Left cardiac atrium (tissue), 4 donors: ENCODE measurements at regions of chr19 and their contacts with region 1.

Region 1: DNA sequence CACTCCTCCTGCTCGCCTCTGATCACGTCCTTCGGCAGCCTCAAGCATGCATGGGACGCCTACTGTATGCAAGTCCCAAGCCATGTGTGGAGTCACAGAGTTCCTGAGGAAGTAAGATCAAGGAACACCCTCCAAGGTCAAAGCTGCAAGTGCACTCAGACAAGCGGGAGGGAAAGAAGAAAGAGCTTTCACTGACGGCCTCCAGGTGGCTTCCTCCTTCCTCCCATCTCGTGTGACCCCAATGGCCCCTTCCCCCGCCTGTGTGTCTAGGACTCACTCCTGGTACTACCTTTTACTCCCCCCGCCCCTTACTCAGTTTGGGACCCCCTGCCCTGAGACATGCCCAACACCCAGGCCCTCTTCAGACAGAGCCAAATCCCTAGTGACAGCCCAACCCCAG is 6.0 kb downstream of the HAUS8 start:
- DNase-seq: no peak
- ATAC-seq: no peak

Region 2: DNA sequence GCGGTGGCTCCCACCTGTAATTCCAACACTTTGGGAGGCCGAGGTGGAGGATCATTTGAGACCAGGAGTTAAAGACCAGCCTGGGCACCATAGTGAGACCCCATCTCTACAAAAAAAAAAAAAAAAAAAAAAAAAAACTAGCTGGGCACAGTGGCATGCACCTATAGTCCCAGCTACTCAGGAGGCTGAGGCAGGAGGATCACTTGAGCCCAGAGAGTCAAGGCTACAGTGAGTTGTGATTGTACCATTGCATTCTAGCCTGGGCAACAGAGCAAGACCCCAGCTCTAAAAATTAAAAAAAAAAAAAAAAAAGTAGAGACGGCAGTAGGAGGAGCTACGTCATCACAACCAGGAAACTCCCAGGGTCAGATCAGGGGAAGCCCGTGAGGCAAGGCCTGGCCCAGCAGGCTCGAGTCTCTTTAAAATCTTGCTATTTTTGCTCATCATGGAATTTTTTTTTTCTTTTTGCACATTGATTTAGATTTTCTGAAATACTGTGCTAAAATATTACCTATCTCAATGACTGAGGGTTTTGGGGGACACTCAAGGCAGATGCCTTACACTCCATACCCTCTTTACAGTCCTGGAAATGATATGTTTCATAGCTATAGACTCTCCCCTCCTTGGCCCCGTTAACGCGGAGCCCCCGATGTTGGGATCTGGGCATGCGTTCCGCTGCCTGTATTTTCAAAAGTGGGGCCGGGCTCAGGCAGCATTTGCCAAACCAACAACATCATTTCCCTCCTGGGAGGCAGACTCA is 101.5 kb after region 1 on chr19:
- intact Hi-C with region 1: no loop called
- DNase-seq: no peak
- ATAC-seq: no peak

Region 3: DNA sequence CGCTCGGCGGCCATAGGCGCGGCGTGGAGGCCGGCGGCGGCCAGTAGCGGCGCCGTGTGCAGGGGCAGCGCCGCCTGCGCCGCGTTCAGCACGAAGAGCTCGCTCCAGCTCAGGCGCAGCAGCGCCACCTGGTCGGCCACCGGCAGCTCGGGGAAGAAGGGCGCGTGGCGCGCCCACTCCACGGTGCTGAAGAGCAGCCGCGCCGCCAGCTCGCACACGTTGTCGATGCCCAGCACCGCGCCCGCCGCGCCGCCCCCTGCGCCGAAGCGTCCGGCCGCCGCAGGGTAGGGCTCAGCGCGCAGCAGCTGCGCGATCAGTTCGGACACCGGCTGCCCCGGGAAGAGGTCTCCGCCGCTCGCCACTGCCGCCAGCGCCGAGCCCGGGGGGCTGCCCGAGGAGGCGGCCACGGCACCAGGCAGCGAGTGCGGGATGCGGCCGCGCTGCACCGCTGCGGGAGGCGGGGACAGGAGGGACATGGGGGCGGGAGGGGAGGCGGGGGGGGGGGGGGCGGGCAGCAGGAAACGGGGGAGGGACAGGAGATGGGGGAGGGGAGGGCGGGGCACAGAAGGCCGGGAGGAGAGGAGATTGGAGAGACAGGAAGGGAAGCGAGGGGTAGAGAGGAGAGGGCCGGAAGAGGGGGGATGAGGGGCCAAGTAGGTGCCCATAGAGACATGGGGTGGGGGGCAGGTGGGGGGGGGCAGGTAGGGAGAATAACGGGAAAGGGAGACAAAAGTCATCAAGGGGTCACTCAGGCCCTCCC is 166.6 kb after region 1 on chr19:
- intact Hi-C with region 1: loop called in 1 of 2 experiments (anchors 5 kb)
- DNase-seq: peak; percentile 80
- ATAC-seq: peak; percentile 91 to 93

Region 4: DNA sequence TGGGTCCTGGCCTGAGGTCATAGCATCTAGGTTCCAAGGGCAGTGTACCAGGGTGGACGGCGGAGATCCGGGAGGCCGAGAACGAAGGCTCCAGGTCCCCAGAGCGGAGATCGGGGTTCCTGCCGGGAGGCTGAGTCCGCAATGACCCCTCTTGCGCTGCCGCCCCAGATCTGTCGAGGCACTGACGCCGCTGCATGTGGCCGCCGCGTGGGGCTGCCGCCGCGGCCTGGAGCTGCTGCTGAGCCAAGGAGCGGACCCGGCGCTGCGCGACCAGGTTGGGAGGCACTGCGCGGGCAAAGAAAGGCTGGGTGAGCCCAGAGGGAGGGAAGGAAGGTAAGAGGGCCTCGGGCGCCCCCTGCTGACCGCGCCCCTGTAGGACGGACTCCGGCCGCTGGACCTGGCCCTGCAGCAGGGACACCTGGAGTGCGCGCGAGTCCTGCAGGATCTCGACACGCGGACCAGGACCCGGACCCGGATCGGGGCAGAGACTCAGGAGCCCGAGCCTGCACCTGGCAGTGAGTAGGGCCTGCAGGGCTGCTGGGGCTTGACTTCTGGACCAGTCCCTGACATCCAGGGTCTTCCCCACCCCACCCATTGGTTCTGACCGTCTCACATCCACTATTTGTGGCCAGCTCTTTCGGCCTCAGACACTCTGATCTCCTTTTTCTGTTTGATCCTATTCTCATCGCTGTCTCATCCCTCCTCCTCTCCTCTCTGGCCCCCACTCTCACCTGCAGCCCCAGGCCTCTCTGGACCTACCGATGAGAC is 213.5 kb after region 1 on chr19:
- intact Hi-C with region 1: loop called (anchors 1 to 5 kb)
- DNase-seq: peak; percentile 85
- ATAC-seq: peak; percentile 95 to 96